ENCODE measurements at regions of chr20 and their contacts with region 1.

Region 1: DNA sequence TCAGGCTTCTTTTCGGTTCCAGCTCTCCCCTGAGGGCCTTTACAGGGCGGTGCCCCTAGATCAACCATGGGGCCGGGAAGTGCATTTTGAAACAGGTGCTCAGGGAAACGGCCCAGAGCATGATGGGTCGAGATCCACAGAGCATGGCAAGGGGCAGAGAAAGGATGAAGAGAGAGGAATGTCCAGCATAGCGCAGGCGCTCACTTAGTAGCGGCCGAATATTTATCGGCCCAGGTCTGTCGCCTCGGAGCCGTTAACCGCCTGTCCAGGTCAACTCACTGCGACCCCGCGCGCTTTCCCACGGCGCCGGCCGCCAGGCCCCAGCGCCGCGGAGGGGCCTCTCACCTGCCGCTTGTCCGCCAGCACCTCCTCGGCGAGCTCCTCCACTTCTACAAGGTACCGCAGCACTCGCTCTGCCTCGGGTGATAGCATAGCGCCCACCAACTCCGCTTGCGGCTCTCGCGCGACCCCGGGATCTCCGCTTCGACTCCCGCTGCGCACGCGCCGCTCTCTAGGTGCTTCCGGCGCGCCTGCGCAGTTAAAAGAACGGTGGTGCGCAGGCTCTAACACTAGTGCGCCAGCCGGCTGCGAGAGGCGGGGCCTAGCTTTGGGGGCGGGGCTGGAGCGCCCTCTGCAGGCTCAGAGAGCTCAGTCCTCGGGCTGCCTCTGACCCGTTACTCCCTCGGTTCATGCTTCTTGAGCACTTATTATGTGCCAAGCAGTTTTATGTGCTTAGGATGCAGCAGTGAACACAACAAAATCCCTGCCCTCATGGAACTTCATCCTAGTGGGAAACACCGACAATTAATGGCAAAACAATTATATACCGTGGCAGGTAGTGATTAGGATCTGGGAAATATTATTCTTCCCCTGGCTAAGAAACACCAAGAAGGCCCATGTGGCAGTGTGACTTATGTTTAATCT is at the start of gene PDRG1:
- DNase-seq: peak; percentile 92 to 99 (median 97)
- ATAC-seq: peak; percentile 100
- H3K4me3 ChIP-seq: peak within 1 kb of the TSS; percentile 90
- H3K4me3 Mint-ChIP-seq: peak within 1 kb of the TSS; percentile 90 to 100 (median 98)
- H3K27ac ChIP-seq: peak within 1 kb of the TSS; percentile 76
- H3K27ac Mint-ChIP-seq: peak within 1 kb of the TSS; percentile 88 to 99 (median 96)
- H3K4me1 ChIP-seq: peaks cover 6 to 12% of the 10 kb centered on the region in 2 donors
- H3K4me1 Mint-ChIP-seq: peaks cover 17 to 37% (median 35%) of the 10 kb centered on the region in 7 donors
- H3K27me3 ChIP-seq: no peaks in the 10 kb centered on the region
- H3K27me3 Mint-ChIP-seq: peaks cover 9 to 17% (median 13%) of the 10 kb centered on the region in 5 donors
- total RNA-seq, gene PDRG1: 7.5 to 13.6 (median 11.4) TPM

Region 2: DNA sequence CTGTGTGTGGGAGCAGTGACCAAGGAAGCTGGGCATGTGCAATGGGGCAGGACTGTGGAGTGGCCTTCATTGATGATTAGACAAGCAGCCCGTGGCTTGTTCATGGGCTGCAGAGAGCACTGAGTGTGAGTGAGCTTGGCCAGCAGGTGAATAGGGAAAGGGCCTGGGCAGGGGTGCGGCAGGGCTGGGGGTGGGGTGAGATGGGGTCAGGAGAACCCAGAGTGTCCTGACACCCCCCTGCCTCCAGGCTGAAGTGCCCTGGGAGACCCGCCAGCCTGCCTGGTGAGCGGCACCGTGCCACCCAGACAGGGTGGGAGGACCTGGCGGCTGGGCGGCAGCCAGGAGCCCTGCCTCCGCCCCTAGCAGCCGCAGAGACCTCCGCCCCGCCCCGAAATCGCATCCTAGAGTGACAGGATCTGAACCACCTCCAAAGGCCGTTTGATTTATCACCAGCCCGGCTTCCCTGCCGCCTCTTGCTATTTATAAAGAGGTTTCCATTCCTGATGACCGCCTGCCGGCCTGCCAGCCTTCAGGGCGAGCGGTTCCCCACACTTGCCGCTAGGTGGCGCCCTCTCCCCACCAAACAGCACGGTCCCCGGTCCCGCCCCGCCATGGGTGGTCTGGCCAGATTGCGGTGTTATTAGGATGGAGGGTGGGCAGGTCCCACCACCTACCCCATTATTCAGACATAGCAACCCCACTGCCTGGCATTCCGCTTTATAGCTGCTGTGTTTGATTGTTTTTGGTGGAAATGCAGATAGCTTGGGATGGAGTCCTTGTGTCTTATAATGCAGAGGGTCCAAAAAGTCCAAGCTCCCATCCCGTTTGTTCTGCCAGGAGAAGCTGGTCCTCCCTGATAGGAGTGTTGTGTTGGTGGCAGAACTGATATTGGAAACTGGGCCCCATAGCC is 129.1 kb before region 1 on chr20:
- CTCF ChIA-PET with region 1: interaction called, 11 read pairs
- POLR2A ChIA-PET with region 1: no interaction called
- intact Hi-C with region 1: loop called (anchors 1 kb)
- DNase-seq: peak; percentile 40 to 80 (median 73)
- ATAC-seq: peak; percentile 91
- H3K4me3 ChIP-seq: no peak overlapping the region
- H3K4me3 Mint-ChIP-seq: peak overlapping the region in 5 of 10 donors; percentile 27 to 47 (median 30)
- H3K27ac ChIP-seq: no peak overlapping the region
- H3K27ac Mint-ChIP-seq: peak overlapping the region in 2 of 9 donors; percentile 47 to 59
- H3K4me1 ChIP-seq: peaks cover 0 to 4% of the 10 kb centered on the region in 2 donors
- H3K4me1 Mint-ChIP-seq: peaks cover 0 to 9% (median 0%) of the 10 kb centered on the region in 7 donors
- H3K27me3 ChIP-seq: no peaks in the 10 kb centered on the region
- H3K27me3 Mint-ChIP-seq: peaks cover 0 to 4% (median 0%) of the 10 kb centered on the region in 5 donors

Region 3: DNA sequence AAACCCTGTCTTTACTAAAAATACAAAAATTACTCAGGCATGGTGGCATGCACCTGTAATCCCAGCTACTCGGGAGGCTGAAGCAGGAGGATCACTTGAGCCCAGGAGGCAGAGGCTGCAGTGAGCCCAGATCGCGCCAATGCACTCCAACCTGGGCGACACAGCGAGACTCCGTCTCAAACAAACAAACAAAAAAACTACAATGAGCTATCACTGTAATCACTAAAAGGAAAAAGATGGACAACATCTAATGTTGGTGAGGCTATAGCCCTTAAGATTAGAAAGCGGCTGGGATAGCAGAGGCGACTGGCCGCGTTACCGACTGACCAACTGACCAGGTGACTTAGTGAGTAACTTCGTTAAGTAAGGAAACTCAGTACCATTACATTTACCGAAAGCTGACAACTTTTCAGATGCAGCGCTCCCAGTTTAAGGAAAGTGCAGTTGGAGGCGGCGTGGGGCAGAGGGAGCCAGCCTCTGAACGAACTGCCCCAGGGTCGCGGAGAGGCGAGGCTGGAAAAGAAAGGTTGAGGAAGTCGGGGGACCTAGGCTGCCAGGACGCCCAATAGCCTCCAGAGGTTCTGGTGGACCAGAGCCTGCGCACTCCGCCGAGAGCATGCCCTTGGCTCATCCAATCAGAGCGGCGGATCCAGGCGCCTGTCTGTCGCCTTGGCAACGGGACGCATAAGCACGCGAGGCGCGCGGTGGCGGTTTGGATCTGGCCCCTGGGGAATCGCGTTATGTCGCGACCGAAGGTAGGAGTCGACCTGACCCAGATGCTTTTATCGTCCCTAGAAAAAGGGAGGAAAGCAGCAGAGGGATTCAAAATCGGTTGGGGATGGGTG is 72.4 kb before region 1 on chr20:
- CTCF ChIA-PET with region 1: interaction called, 9 read pairs
- POLR2A ChIA-PET with region 1: interaction called, 3 read pairs
- intact Hi-C with region 1: loop called (anchors 1 kb)
- DNase-seq: peak; percentile 55 to 77 (median 71)
- ATAC-seq: peak; percentile 93
- H3K4me3 ChIP-seq: peak overlapping the region; percentile 68
- H3K4me3 Mint-ChIP-seq: peak overlapping the region; percentile 89 to 97 (median 94)
- H3K27ac ChIP-seq: peak overlapping the region; percentile 27
- H3K27ac Mint-ChIP-seq: peak overlapping the region; percentile 32 to 92 (median 79)
- H3K4me1 ChIP-seq: no peaks in the 10 kb centered on the region
- H3K4me1 Mint-ChIP-seq: peaks cover 6 to 17% (median 12%) of the 10 kb centered on the region in 7 donors
- H3K27me3 ChIP-seq: no peaks in the 10 kb centered on the region
- H3K27me3 Mint-ChIP-seq: peaks cover 0 to 53% (median under 1%) of the 10 kb centered on the region in 5 donors

Region 4: DNA sequence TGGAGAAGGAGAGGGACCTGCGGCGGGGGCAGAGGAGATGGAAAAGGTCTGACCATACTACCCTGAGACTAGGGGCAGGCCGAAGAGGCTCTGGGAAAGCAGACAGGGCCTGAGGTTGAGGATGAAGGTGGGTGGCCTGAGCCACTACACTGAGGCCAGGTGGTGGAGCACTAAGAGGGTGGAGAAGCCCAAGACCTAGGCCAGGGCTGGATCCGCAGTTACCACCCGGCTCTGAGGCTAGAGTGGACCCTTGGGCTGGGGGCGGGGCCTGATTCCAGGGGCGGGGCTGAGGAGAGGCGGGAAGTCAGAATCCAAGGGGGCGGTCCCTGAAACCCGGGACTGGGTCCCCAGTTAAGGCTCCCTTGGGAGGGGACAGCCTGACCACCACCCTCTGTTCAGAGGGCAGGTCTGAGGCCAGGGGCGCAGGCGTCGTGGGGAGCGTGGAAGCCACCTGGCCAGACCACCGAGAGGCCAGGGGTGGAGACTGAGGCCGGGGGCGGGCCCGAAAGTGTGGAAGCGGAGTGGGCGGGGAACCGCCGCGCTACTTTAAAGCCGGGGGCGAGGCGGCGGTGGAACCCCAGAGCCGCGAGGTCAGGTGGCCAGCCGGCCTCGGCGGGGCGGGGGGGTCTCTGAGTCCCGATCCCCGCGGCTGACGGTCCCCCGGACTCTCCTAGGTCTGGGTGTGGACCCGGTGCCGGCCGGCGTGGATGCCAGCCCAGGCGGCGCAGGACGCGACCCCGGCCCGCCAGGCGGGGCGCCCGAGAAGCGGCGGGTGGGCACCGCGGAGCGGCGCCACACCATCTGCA is 66.7 kb after region 1 on chr20:
- CTCF ChIA-PET with region 1: no interaction called
- POLR2A ChIA-PET with region 1: no interaction called
- intact Hi-C with region 1: loop called in 1 of 2 experiments (anchors 2 kb)
- DNase-seq: peak in 8 of 9 donors; percentile 17 to 59 (median 36)
- ATAC-seq: peak; percentile 61
- H3K4me3 ChIP-seq: peak overlapping the region; percentile 48
- H3K4me3 Mint-ChIP-seq: peak overlapping the region; percentile 54 to 91 (median 82)
- H3K27ac ChIP-seq: no peak overlapping the region
- H3K27ac Mint-ChIP-seq: no peak overlapping the region
- H3K4me1 ChIP-seq: peaks cover 0 to 6% of the 10 kb centered on the region in 2 donors
- H3K4me1 Mint-ChIP-seq: peaks cover 10 to 28% (median 23%) of the 10 kb centered on the region in 7 donors
- H3K27me3 ChIP-seq: peaks cover 0 to 3% of the 10 kb centered on the region in 2 donors
- H3K27me3 Mint-ChIP-seq: peaks cover 66 to 81% (median 70%) of the 10 kb centered on the region in 5 donors

Region 5: GRCh38 chr20:32109392-32110172 is 157.8 kb after region 1 on chr20 and contains the start of gene TM9SF4:
- CTCF ChIA-PET with region 1: no interaction called
- POLR2A ChIA-PET with region 1: no interaction called
- intact Hi-C with region 1: loop called (anchors 1 to 2 kb)
- DNase-seq: peak; percentile 87 to 96 (median 93)
- ATAC-seq: peak; percentile 92
- H3K4me3 ChIP-seq: peak within 1 kb of the TSS; percentile 92
- H3K4me3 Mint-ChIP-seq: peak within 1 kb of the TSS; percentile 78 to 100 (median 96)
- H3K27ac ChIP-seq: peak within 1 kb of the TSS; percentile 94
- H3K27ac Mint-ChIP-seq: peak within 1 kb of the TSS; percentile 95 to 100 (median 100)
- H3K4me1 ChIP-seq: peaks cover 11% of the 10 kb centered on the region in 2 donors
- H3K4me1 Mint-ChIP-seq: peaks cover 26 to 44% (median 39%) of the 10 kb centered on the region in 7 donors
- H3K27me3 ChIP-seq: no peaks in the 10 kb centered on the region
- H3K27me3 Mint-ChIP-seq: no peaks in the 10 kb centered on the region
- total RNA-seq, gene TM9SF4: 35.2 to 61.0 (median 41.5) TPM